Activated naive CD4-positive, alpha-beta T cell treated with anti-CD3 and anti-CD28 coated beads for 36 hours (primary cell): ENCODE measurements at regions of chr6 and their contacts with region 1.

Region 1: DNA sequence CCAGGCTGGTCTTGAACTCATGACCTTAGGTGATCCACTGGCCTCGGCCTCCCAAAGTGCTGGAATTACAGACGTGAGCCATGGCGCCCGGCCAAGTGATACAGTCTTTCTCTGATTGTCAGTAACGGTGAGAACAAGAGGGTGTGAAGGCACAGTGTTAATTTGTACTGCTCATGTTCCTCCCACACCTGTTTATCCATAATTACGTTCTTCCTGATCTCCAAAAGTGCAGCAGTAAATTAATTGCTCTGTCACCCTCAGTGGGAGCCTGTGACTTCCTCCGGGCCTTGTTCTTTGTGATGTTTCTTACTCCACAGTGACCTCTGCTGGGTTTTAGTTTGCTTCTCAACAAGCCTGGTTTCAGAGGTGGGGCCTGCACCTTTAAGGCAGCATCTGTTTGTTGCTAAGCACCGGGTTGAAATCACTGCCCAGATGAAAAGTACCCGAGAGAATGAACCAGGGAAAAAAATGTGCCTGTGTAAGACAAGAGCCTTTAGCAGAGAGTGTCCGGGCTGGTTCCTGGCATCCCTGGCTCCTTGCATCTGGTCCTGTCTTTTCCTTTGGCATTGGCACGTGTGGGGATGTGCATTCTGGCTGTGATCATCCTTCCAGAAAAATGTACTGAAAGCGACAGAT is 89.1 kb upstream of the CLDN20 start:
- DNase-seq: peak; percentile 81
- H3K4me3 Mint-ChIP-seq: no peak overlapping the region
- H3K27ac Mint-ChIP-seq: no peak overlapping the region
- H3K4me1 Mint-ChIP-seq: peaks cover 48% of the 10 kb centered on the region
- H3K27me3 Mint-ChIP-seq: no peaks in the 10 kb centered on the region

Region 2: DNA sequence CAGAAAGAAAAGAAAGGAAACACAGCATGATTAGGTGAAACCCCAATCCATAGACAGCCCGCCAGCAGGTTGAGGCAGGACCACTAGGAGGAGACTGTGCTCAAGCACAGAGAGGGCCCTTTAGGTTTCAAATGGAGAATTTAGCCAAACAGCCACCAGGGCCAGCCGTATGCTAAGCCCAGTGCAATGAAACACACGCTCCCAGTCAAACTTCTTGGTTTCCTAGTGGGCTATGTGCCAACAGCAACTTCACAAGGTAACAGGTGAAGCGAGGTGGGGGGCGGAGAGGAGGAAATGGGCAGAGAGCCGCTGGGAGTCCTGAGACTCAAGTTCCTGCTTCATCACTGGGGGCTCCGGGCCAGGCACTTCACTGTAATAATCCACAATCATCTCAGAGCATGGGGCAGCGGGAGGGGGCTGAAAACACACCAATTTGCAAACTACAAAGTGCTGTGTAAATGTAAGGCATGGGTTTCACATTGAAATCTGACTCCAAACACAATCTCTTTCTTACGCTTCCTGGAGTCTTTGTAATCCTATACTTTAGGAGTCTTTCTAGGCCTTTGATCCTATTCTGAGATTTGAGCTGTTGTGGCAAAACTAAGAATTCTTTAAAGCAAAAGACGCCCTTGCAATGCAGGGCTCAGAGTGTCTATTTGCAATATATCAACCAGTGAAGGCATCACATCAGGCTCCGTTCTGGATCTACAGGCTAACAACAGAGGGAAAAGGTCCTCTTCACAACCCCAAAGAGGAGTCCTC is 1018.4 kb before region 1 on chr6:
- CTCF ChIA-PET with region 1: no interaction called
- intact Hi-C with region 1: loop called (anchors 5 kb)
- DNase-seq: peak; percentile 86
- H3K4me3 Mint-ChIP-seq: peak overlapping the region; percentile 60
- H3K27ac Mint-ChIP-seq: peak overlapping the region; percentile 77
- H3K4me1 Mint-ChIP-seq: peaks cover 53% of the 10 kb centered on the region
- H3K27me3 Mint-ChIP-seq: no peaks in the 10 kb centered on the region

Region 3: GRCh38 chr6:154683756-154684523 is 490.8 kb before region 1 on chr6:
- CTCF ChIA-PET with region 1: no interaction called
- intact Hi-C with region 1: loop called (anchors 1 kb)
- DNase-seq: no peak
- H3K4me3 Mint-ChIP-seq: no peak overlapping the region
- H3K27ac Mint-ChIP-seq: no peak overlapping the region
- H3K4me1 Mint-ChIP-seq: peaks cover 14% of the 10 kb centered on the region
- H3K27me3 Mint-ChIP-seq: no peaks in the 10 kb centered on the region

Region 4: DNA sequence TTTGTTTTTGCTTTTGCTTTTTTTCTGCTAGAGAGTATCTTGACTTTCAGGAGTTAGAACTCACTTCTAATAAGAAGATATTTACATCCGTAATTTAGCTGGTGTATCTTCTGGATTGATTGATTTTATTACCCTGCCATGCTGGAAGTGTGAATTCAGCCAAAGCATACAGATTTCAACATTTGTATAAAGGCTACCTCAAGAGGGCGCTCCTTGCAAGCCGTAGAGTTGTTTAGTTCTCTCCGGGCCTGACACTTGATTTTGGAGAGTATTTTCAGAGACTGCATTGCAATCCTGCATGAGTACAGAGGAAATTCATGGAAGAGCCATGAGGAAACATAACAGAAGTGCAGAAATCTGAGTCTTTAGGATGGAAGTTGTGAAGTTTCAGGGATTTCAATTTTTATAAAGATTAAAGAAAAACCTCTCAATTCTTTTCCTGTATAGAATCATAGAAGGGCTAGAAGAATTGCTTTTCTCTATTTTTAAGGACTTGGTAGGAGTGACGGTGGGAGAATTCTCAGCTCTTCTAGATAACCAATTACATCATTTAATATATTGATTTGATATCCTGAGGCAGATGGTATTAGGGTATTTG is 246.3 kb before region 1 on chr6:
- CTCF ChIA-PET with region 1: interaction called, 101 read pairs
- intact Hi-C with region 1: loop called (anchors 1 kb)
- DNase-seq: peak; percentile 88
- H3K4me3 Mint-ChIP-seq: no peak overlapping the region
- H3K27ac Mint-ChIP-seq: no peak overlapping the region
- H3K4me1 Mint-ChIP-seq: peaks cover 3% of the 10 kb centered on the region
- H3K27me3 Mint-ChIP-seq: no peaks in the 10 kb centered on the region

Region 5: GRCh38 chr6:155154158-155154830 is 20.4 kb before region 1 on chr6:
- CTCF ChIA-PET with region 1: interaction called, 5 read pairs
- intact Hi-C with region 1: loop called (anchors 1 kb)
- DNase-seq: peak; percentile 42
- H3K4me3 Mint-ChIP-seq: no peak overlapping the region
- H3K27ac Mint-ChIP-seq: peak overlapping the region; percentile 89
- H3K4me1 Mint-ChIP-seq: peaks cover 70% of the 10 kb centered on the region
- H3K27me3 Mint-ChIP-seq: no peaks in the 10 kb centered on the region

Region 6: GRCh38 chr6:155270561-155271091 is 95.9 kb after region 1 on chr6:
- CTCF ChIA-PET with region 1: interaction called, 11 read pairs
- intact Hi-C with region 1: loop called (anchors 5 kb)
- DNase-seq: no peak
- H3K4me3 Mint-ChIP-seq: no peak overlapping the region
- H3K27ac Mint-ChIP-seq: no peak overlapping the region
- H3K4me1 Mint-ChIP-seq: peaks cover 9% of the 10 kb centered on the region
- H3K27me3 Mint-ChIP-seq: no peaks in the 10 kb centered on the region

Region 7: DNA sequence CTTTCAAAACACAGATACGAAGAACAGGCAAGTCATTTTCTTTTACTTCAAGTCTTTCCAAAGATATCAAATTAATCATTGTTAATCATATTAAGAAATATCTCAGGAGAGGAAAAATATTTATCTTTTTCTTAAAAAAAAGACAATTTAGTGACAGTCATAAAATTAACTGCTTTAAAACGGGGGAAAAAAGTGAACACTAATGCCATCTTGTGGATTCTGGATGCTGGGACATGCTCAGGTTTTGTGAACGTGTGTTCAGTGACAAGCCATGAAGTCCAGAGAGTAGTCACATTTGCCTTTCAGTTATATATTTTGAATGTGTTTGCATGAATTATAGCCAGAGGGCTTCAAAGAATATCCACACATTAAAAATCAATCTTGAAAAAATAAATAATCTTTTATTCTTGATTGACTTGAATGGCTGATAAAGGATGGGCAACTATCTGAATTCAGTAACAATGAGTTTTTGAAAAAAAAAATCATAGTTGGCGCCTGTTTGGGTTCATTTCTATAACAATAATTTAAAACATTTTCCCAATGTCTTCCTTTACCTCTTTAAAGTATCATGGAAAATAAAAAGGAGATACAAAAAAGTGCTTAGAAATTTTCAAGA is 355.6 kb after region 1 on chr6:
- CTCF ChIA-PET with region 1: interaction called, 4 read pairs
- intact Hi-C with region 1: loop called (anchors 1 kb)
- DNase-seq: peak; percentile 47
- H3K4me3 Mint-ChIP-seq: no peak overlapping the region
- H3K27ac Mint-ChIP-seq: no peak overlapping the region
- H3K4me1 Mint-ChIP-seq: peaks cover 22% of the 10 kb centered on the region
- H3K27me3 Mint-ChIP-seq: no peaks in the 10 kb centered on the region

Region 8: DNA sequence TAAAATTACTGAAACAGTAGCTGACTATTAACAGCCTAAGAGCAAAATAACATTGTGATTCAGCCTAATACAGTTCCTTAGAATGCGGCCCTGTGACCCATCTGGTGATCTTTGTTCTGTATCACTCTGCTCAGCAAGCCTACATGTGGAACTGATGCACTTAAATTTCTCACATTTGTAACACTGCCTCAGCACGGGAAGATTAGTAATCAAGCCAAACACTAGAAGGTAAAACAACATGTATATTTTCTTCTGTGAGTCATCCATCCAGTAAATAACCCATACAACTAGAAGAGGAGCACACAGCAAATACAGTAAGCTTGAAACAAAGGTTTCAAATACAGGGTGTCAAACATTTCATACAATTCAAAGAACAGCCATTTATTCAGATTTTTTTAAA is 470.6 kb after region 1 on chr6:
- CTCF ChIA-PET with region 1: no interaction called
- intact Hi-C with region 1: no loop called
- DNase-seq: no peak
- H3K4me3 Mint-ChIP-seq: no peak overlapping the region
- H3K27ac Mint-ChIP-seq: no peak overlapping the region
- H3K4me1 Mint-ChIP-seq: peaks cover 5% of the 10 kb centered on the region
- H3K27me3 Mint-ChIP-seq: no peaks in the 10 kb centered on the region